Prostate gland (tissue), 2 donors: ENCODE measurements at regions of chr1 and their contacts with region 1.

Region 1: GRCh38 chr1:171801487-171801891 is 20.0 kb downstream of the METTL13 start:
- DNase-seq: peak; percentile 15
- H3K4me3 ChIP-seq: no peak overlapping the region
- H3K27ac ChIP-seq: no peak overlapping the region
- H3K4me1 ChIP-seq: no peaks in the 10 kb centered on the region
- H3K27me3 ChIP-seq: no peaks in the 10 kb centered on the region
- CTCF ChIP-seq: peak; percentile 33 to 70 (median 62)
- POLR2A ChIP-seq: no peak

Region 2: GRCh38 chr1:171984850-171985485 is 183.5 kb after region 1 on chr1:
- intact Hi-C with region 1: loop called (anchors 2 kb)
- DNase-seq: no peak
- H3K4me3 ChIP-seq: no peak overlapping the region
- H3K27ac ChIP-seq: no peak overlapping the region
- H3K4me1 ChIP-seq: no peaks in the 10 kb centered on the region
- H3K27me3 ChIP-seq: no peaks in the 10 kb centered on the region
- CTCF ChIP-seq: peak; percentile 44 to 74 (median 66)
- POLR2A ChIP-seq: no peak

Region 3: GRCh38 chr1:172443626-172444453 is 642.4 kb after region 1 on chr1 and contains the start of gene PIGC:
- intact Hi-C with region 1: loop called (anchors 10 kb)
- DNase-seq: peak; percentile 86
- H3K4me3 ChIP-seq: peak within 1 kb of the TSS; percentile 87 to 93
- H3K27ac ChIP-seq: peak within 1 kb of the TSS; percentile 71 to 83
- H3K4me1 ChIP-seq: no peaks in the 10 kb centered on the region
- H3K27me3 ChIP-seq: no peaks in the 10 kb centered on the region
- CTCF ChIP-seq: peak; percentile 53 to 88 (median 84)
- POLR2A ChIP-seq: no peak
- total RNA-seq, gene PIGC: 24.1 to 34.1 TPM